Mammary epithelial cell (primary cell): ENCODE measurements at regions of chr3 and their contacts with region 1.

Region 1: DNA sequence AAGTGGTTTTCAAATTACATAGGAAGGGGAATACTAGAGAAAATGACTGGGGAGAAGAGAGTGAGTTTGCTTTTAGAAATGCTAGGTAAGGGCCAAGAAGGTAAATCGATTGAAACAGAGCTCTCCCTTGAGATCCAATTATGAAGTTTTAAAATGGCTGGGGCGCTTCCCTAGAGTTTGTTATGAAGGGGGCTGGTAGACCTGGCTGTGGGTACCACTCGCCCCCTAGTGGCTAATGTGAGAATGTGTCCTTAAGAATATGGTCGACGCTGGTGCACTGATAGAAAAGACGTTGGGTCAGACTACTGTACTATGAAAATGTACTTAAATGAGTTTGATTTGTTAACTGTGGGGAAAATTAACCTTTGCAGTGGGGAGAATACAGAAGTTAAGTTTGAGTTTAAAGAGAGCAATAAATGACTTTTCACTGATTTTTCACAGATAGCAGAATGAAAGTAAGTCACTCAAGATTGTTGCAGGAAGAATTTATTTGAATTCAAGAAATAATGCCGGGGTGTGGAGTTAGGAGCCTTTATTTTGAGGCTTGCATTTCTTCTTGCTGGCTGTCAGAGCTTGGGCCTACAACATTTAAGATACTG is 9.2 kb downstream of the TMPRSS7 start:
- DNase-seq: peak; percentile 58
- H3K4me3 ChIP-seq: no peak overlapping the region
- H3K27ac ChIP-seq: peak overlapping the region; percentile 17
- H3K4me1 ChIP-seq: no peaks in the 10 kb centered on the region
- H3K27me3 ChIP-seq: no peaks in the 10 kb centered on the region
- CTCF ChIP-seq: peak; percentile 85

Region 2: DNA sequence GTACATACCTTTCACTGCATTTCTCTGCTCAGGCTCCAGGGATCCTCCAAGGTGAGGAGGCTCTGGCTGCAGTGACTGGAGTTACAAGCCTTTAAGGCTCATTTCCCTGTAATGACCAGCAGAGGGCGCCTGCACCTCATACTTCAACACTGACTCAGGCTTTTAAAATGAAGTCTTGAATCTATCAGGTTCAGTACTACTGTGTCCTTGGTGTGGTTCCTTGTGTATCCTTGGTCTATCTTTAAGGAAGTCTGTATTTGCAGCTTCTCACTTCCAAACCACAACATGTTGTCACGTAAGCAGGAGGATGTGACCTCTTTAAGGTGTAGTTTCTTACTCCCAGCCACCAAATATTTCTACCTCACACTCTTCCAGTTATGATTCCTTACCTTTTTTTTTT is 326.1 kb before region 1 on chr3:
- CTCF ChIA-PET with region 1: no interaction called
- dilution Hi-C with region 1: no loop called
- in situ Hi-C with region 1: no loop called
- intact Hi-C with region 1: loop called (anchors 2 kb)
- DNase-seq: peak; percentile 88
- H3K4me3 ChIP-seq: no peak overlapping the region
- H3K27ac ChIP-seq: peak overlapping the region; percentile 33
- H3K4me1 ChIP-seq: peaks cover 18% of the 10 kb centered on the region
- H3K27me3 ChIP-seq: no peaks in the 10 kb centered on the region
- CTCF ChIP-seq: peak; percentile 90 to 92

Region 3: GRCh38 chr3:111989061-111989678 is 54.5 kb before region 1 on chr3:
- CTCF ChIA-PET with region 1: interaction called, 11 read pairs
- dilution Hi-C with region 1: no loop called
- in situ Hi-C with region 1: no loop called
- intact Hi-C with region 1: loop called (anchors 1 kb)
- DNase-seq: peak; percentile 55
- H3K4me3 ChIP-seq: no peak overlapping the region
- H3K27ac ChIP-seq: no peak overlapping the region
- H3K4me1 ChIP-seq: no peaks in the 10 kb centered on the region
- H3K27me3 ChIP-seq: no peaks in the 10 kb centered on the region
- CTCF ChIP-seq: peak; percentile 79 to 82

Region 4: DNA sequence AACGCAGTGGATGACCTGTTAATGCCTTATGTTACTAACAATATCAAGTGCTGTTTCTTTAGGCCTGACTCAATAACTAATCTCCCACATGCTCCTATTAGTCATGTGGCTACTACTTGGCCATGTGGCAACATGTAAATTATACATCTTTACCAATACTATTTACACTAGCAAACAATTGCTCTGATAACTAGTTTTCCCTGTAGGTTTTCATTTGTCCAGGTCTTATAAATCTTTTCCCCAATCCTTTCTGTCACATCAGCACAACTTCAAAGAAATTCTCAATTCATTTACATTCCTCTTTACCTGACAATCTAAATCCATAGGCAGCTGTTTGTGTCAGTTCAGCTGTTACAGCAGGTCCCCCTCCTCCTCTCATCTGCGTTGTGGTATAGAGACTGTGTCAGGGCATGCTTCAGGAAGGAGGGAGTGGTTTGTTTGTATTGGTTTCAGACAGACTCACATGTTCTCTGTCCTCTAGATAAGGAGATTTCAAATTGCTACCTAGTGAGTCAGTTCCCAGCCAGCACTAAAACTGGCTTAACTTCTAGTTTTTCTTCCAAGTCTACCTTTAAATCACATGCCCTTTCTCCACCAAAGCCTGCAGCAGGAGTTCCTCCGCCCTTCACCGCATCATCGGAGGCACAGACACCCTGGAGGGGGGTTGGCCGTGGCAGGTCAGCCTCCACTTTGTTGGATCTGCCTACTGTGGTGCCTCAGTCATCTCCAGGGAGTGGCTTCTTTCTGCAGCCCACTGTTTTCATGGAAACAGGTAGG is 31.2 kb after region 1 on chr3:
- CTCF ChIA-PET with region 1: interaction called, 5 read pairs
- dilution Hi-C with region 1: no loop called
- in situ Hi-C with region 1: no loop called
- intact Hi-C with region 1: loop called (anchors 2 kb)
- DNase-seq: peak; percentile 100
- H3K4me3 ChIP-seq: peak overlapping the region in 2 of 3 experiments; percentile 12 to 19
- H3K27ac ChIP-seq: peak overlapping the region; percentile 100
- H3K4me1 ChIP-seq: peaks cover 20% of the 10 kb centered on the region
- H3K27me3 ChIP-seq: no peaks in the 10 kb centered on the region
- CTCF ChIP-seq: no peak

Region 5: GRCh38 chr3:112097378-112097777 is 53.7 kb after region 1 on chr3:
- CTCF ChIA-PET with region 1: interaction called, 3 read pairs
- dilution Hi-C with region 1: no loop called
- in situ Hi-C with region 1: no loop called
- intact Hi-C with region 1: loop called (anchors 5 kb)
- DNase-seq: peak; percentile 99
- H3K4me3 ChIP-seq: no peak overlapping the region
- H3K27ac ChIP-seq: peak overlapping the region; percentile 70
- H3K4me1 ChIP-seq: peaks cover 37% of the 10 kb centered on the region
- H3K27me3 ChIP-seq: no peaks in the 10 kb centered on the region
- CTCF ChIP-seq: no peak

Region 6: GRCh38 chr3:112136959-112137693 is 93.4 kb after region 1 on chr3:
- CTCF ChIA-PET with region 1: no interaction called
- dilution Hi-C with region 1: no loop called
- in situ Hi-C with region 1: no loop called
- intact Hi-C with region 1: no loop called
- DNase-seq: peak; percentile 53
- H3K4me3 ChIP-seq: no peak overlapping the region
- H3K27ac ChIP-seq: no peak overlapping the region
- H3K4me1 ChIP-seq: peaks cover 9% of the 10 kb centered on the region
- H3K27me3 ChIP-seq: no peaks in the 10 kb centered on the region
- CTCF ChIP-seq: peak; percentile 77 to 79